Right cardiac atrium (tissue), 5 donors: ENCODE measurements at regions of chr6 and their contacts with region 1.

Region 1: GRCh38 chr6:127302728-127303660 is 36.3 kb downstream of the RNF146 start:
- DNase-seq: peak in 1 of 3 donors; percentile 58
- ATAC-seq: no peak
- H3K4me3 ChIP-seq: no peak overlapping the region
- H3K27ac ChIP-seq: no peak overlapping the region
- H3K4me1 ChIP-seq: peaks cover 3% of the 10 kb centered on the region
- H3K27me3 ChIP-seq: no peaks in the 10 kb centered on the region

Region 2: GRCh38 chr6:127420556-127420955 is 117.6 kb after region 1 on chr6:
- intact Hi-C with region 1: loop called in 1 of 4 experiments (anchors 10 kb)
- DNase-seq: peak; percentile 53 to 64 (median 61)
- ATAC-seq: peak; percentile 95 to 96
- H3K4me3 ChIP-seq: no peak overlapping the region
- H3K27ac ChIP-seq: no peak overlapping the region
- H3K4me1 ChIP-seq: no peaks in the 10 kb centered on the region
- H3K27me3 ChIP-seq: no peaks in the 10 kb centered on the region

Region 3: GRCh38 chr6:127539272-127539671 is 236.3 kb after region 1 on chr6:
- intact Hi-C with region 1: loop called in 1 of 4 experiments (anchors 10 kb)
- DNase-seq: no peak
- ATAC-seq: no peak
- H3K4me3 ChIP-seq: no peak overlapping the region
- H3K27ac ChIP-seq: no peak overlapping the region
- H3K4me1 ChIP-seq: no peaks in the 10 kb centered on the region
- H3K27me3 ChIP-seq: no peaks in the 10 kb centered on the region